Activated CD4-positive, alpha-beta T cell treated with anti-CD3 and anti-CD28 coated beads for 36 hours (primary cell): ENCODE measurements at regions of chr1 and their contacts with region 1.

Region 1: DNA sequence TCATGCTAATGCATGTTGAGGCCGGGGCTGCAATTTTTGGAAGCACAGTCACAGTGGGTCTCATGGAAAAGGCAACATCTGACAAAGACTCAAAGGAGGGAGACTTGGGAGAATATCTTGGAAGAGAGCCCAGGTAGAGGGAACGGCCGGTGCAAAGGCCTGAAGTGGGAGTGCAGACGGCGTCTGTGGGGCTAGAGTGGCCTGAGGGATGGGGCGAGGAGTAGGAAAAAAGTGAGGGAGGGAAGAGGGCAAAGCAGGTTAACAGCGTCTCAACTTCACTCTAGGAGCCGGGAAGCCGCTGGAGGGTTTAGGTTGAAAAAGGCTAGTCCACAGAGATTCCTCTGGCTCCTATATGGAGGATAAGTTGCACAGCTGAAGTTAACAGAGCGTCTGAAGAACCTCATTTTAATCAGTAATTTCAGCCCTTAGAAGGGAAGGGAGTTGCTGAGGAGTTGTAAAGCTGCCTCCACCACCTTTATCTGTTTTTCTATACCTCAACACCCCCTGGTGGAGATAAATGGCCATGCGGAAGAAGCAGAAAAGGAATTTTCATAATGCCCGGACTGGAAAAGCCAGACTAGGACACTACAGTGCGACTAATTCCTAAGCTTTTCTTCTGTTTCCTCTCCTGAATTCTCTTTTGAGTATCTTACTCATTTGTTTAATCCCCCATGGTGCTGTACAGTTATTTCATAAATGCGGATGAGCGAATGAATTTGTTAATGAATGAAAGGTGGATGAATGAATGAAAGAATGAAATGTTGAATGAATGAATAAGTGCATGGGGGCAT is 78.7 kb upstream of the ZNF281 start:
- DNase-seq: peak; percentile 59
- ATAC-seq: peak; percentile 77
- H3K4me3 Mint-ChIP-seq: no peak overlapping the region
- H3K27ac Mint-ChIP-seq: no peak overlapping the region
- H3K4me1 Mint-ChIP-seq: peaks cover 8% of the 10 kb centered on the region
- H3K27me3 Mint-ChIP-seq: peaks cover 13% of the 10 kb centered on the region

Region 2: GRCh38 chr1:199684686-199685273 is 803.8 kb before region 1 on chr1:
- CTCF ChIA-PET with region 1: interaction called, 8 read pairs
- POLR2A ChIA-PET with region 1: no interaction called
- intact Hi-C with region 1: loop called (anchors 1 to 5 kb)
- DNase-seq: peak; percentile 29
- ATAC-seq: peak; percentile 39
- H3K4me3 Mint-ChIP-seq: no peak overlapping the region
- H3K27ac Mint-ChIP-seq: no peak overlapping the region
- H3K4me1 Mint-ChIP-seq: no peaks in the 10 kb centered on the region
- H3K27me3 Mint-ChIP-seq: peaks cover 8% of the 10 kb centered on the region

Region 3: GRCh38 chr1:200262326-200262965 is 226.1 kb before region 1 on chr1:
- CTCF ChIA-PET with region 1: interaction called, 3 read pairs
- POLR2A ChIA-PET with region 1: no interaction called
- intact Hi-C with region 1: loop called in 1 of 2 experiments (anchors 5 kb)
- DNase-seq: peak; percentile 60
- ATAC-seq: peak; percentile 76
- H3K4me3 Mint-ChIP-seq: no peak overlapping the region
- H3K27ac Mint-ChIP-seq: no peak overlapping the region
- H3K4me1 Mint-ChIP-seq: no peaks in the 10 kb centered on the region
- H3K27me3 Mint-ChIP-seq: no peaks in the 10 kb centered on the region

Region 4: DNA sequence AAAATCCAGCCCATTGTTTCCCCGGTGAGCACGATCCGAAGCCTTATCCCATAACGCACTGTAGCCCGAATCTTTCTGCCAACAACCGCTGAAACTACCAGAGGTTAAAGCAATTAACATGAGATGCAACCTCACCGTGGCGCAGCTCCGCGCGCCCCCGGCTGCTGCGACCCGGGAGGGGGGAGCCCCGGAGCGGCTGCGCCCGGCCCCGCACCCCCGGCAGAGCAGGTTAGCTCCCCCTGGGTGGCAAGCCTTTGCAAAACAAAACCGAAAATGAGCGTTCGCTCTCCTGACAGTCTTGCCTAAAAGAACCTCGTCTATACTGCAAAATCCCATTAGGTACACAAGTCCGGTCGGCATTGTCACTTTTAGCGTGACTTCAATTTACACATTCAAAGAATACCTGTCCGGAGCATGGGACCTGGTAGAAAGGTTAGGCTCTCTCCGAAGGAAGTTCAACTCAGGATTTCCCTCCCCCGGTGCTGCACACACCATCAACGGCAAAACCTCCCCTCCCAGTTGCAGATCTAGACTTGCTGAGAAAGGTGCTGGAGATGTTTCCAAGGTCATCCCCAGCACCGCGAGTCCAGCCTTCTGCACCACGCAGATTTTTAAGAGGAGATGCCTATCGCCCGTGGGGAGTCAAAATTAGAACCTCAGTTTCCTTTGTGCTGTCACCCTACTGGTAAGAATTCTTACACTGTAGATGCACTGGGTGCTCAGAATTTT is 186.2 kb before region 1 on chr1:
- CTCF ChIA-PET with region 1: interaction called, 4 read pairs
- POLR2A ChIA-PET with region 1: no interaction called
- intact Hi-C with region 1: loop called (anchors 5 to 10 kb)
- DNase-seq: peak; percentile 77
- ATAC-seq: peak; percentile 93
- H3K4me3 Mint-ChIP-seq: peak overlapping the region; percentile 73
- H3K27ac Mint-ChIP-seq: no peak overlapping the region
- H3K4me1 Mint-ChIP-seq: peaks cover 12% of the 10 kb centered on the region
- H3K27me3 Mint-ChIP-seq: no peaks in the 10 kb centered on the region

Region 5: DNA sequence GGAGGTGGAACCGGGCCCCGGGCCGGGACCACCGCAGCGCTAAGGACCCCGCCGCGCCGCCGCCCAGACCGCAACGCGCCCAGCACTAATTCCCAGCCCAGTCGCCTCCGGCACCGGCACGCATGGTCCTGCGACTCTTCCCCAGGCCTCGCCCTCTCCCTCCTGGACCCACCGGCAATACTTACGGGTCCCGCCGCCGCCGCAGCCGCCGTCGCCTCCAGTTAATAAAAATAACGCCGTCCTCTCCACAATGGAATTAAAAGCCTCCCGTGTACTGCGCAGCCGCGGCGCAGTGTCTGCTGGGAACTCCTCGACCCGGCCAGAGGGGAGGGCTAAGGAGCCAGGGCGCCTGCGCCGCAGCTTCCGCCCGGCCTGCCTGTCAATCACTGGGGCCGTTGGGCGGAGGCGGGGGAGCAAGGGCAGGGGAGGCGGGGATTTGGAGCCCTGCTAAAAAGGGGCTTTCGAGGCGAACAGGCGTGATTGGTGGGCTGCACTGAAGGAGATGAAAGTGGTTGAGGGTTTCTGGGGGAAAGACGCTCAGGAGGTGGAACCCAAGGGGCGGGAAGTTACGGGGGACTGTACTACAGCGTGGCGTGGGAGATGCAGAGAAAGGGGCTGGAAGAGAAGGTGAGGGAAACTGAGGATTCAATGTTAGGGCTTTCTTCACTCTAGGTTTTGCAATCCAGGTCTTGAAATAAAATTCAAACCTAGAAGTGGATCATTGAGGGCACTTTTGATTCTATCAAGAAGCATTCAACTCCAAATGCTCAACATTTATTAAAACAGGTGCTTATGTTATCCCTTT is 78.6 kb before region 1 on chr1 and contains the start of gene ZNF281:
- CTCF ChIA-PET with region 1: no interaction called
- POLR2A ChIA-PET with region 1: no interaction called
- intact Hi-C with region 1: loop called (anchors 1 kb)
- DNase-seq: peak; percentile 97
- ATAC-seq: peak; percentile 99
- H3K4me3 Mint-ChIP-seq: peak within 1 kb of the TSS; percentile 80
- H3K27ac Mint-ChIP-seq: peak within 1 kb of the TSS; percentile 93
- H3K4me1 Mint-ChIP-seq: peaks cover 49% of the 10 kb centered on the region
- H3K27me3 Mint-ChIP-seq: no peaks in the 10 kb centered on the region
- total RNA-seq, gene ZNF281: 10.8 to 13.5 TPM

Region 6: GRCh38 chr1:200473698-200474371 is 14.7 kb before region 1 on chr1:
- CTCF ChIA-PET with region 1: interaction called, 5 read pairs
- POLR2A ChIA-PET with region 1: no interaction called
- intact Hi-C with region 1: loop called (anchors 1 kb)
- DNase-seq: peak; percentile 55
- ATAC-seq: peak; percentile 80
- H3K4me3 Mint-ChIP-seq: peak overlapping the region; percentile 32
- H3K27ac Mint-ChIP-seq: peak overlapping the region; percentile 48
- H3K4me1 Mint-ChIP-seq: peaks cover 47% of the 10 kb centered on the region
- H3K27me3 Mint-ChIP-seq: peaks cover 8% of the 10 kb centered on the region

Region 7: DNA sequence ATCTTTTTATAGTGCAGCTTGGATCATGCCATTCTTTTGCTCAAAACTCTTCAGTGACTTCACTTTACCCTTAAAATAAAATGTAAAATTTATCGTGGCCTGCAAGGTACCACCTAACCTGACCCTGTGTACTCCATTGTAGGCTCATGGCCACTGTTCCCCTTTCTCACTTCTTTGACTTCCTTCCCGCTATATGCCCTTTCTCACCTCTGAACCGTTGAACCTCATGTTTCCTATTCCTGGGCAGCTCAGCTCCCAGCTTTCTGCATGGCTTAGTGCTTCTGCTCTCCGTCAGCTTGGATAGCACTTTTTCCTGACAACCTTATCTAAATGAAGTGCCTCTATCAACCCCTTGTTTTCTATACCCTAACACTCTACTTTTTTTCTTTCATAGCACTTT is 323.1 kb after region 1 on chr1:
- CTCF ChIA-PET with region 1: no interaction called
- POLR2A ChIA-PET with region 1: no interaction called
- intact Hi-C with region 1: no loop called
- DNase-seq: no peak
- ATAC-seq: no peak
- H3K4me3 Mint-ChIP-seq: no peak overlapping the region
- H3K27ac Mint-ChIP-seq: no peak overlapping the region
- H3K4me1 Mint-ChIP-seq: no peaks in the 10 kb centered on the region
- H3K27me3 Mint-ChIP-seq: no peaks in the 10 kb centered on the region